ENCODE measurements at regions of chr16 and their contacts with region 1.

Region 1: GRCh38 chr16:72008424-72009216 is at the start of gene DHODH:
- DNase-seq: peak; percentile 98
- H3K4me3 ChIP-seq: peak within 1 kb of the TSS; percentile 91 to 95
- H3K4me3 Mint-ChIP-seq: peak within 1 kb of the TSS; percentile 94 to 100 (median 96)
- H3K27ac ChIP-seq: peak within 1 kb of the TSS; percentile 44
- H3K27ac Mint-ChIP-seq: peak within 1 kb of the TSS; percentile 51 to 96 (median 94)
- H3K4me1 ChIP-seq: no peaks in the 10 kb centered on the region
- H3K4me1 Mint-ChIP-seq: peaks cover 5 to 24% (median 10%) of the 10 kb centered on the region in 4 donors
- H3K27me3 ChIP-seq: no peaks in the 10 kb centered on the region
- H3K27me3 Mint-ChIP-seq: peaks cover 0 to under 1% of the 10 kb centered on the region in 2 donors
- total RNA-seq, gene DHODH: 9.6 to 9.7 TPM

Region 2: DNA sequence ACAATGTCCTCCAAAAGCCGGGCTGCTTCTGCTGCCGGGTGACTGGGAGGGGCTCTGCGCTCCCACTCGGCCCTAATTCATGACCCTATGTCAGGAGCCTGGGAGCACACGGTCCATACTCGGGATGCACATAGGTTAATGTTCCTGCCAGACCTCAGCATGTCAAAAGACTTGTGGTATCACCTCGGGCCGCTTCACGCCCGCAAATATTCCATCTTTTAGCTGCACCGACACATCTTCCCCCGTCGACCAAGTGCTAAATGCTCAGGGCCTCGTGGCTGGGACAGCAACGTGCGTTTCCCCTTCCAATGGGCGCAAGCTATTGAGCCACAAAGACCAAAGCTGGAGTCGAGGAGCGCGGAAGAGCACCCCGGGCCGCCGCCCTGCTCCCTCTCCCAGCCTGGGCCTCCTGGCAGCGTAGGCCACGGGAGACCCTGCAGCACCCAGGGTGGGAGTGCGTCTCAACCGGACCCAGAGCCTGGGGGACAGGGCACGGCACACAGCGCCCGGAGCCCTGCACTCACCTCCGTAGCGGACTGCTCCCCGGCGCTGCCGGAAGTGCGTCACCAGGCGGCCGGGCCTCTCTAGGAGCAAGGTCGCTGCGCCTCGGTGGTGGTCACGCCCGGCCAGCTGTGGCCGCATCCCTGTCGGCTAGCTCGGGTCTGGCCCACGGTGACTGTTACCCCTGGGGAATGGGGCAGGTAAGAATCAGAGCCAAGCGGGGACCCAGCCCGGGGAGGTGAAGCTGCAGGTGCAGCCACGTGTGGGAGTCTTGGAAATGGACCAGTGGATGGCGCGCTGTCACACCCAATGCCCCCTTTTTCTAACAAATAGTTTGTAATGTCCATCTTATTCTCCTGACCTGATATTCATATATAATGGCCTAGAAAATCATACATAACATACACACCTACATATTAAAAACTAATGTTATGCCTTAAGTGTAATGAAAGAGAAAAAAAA is 546.7 kb before region 1 on chr16 and contains the start of gene ZNF23:
- CTCF ChIA-PET with region 1: no interaction called
- POLR2A ChIA-PET with region 1: no interaction called
- intact Hi-C with region 1: loop called (anchors 10 kb)
- DNase-seq: peak; percentile 69 to 77 (median 71)
- H3K4me3 ChIP-seq: peak within 1 kb of the TSS; percentile 80 to 90
- H3K4me3 Mint-ChIP-seq: peak within 1 kb of the TSS; percentile 94 to 97 (median 96)
- H3K27ac ChIP-seq: peak within 1 kb of the TSS; percentile 76
- H3K27ac Mint-ChIP-seq: peak within 1 kb of the TSS; percentile 81 to 97 (median 95)
- H3K4me1 ChIP-seq: peaks cover 20% of the 10 kb centered on the region
- H3K4me1 Mint-ChIP-seq: peaks cover 10 to 31% (median 22%) of the 10 kb centered on the region in 4 donors
- H3K27me3 ChIP-seq: no peaks in the 10 kb centered on the region
- H3K27me3 Mint-ChIP-seq: no peaks in the 10 kb centered on the region
- total RNA-seq, gene ZNF23: 15.2 to 16.2 TPM

Region 3: GRCh38 chr16:71484006-71484893 is 524.4 kb before region 1 on chr16:
- CTCF ChIA-PET with region 1: no interaction called
- POLR2A ChIA-PET with region 1: no interaction called
- intact Hi-C with region 1: loop called (anchors 5 kb)
- DNase-seq: peak; percentile 84 to 92 (median 87)
- H3K4me3 ChIP-seq: peak overlapping the region; percentile 87 to 98
- H3K4me3 Mint-ChIP-seq: peak overlapping the region; percentile 82 to 92 (median 88)
- H3K27ac ChIP-seq: peak overlapping the region; percentile 87
- H3K27ac Mint-ChIP-seq: peak overlapping the region; percentile 81 to 98 (median 97)
- H3K4me1 ChIP-seq: peaks cover 10% of the 10 kb centered on the region
- H3K4me1 Mint-ChIP-seq: peaks cover 14 to 18% (median 17%) of the 10 kb centered on the region in 4 donors
- H3K27me3 ChIP-seq: no peaks in the 10 kb centered on the region
- H3K27me3 Mint-ChIP-seq: peaks cover 0 to 3% of the 10 kb centered on the region in 2 donors

Region 4: GRCh38 chr16:71723537-71724319 is 284.9 kb before region 1 on chr16:
- CTCF ChIA-PET with region 1: no interaction called
- POLR2A ChIA-PET with region 1: no interaction called
- intact Hi-C with region 1: loop called (anchors 1 kb)
- DNase-seq: peak; percentile 87 to 91 (median 88)
- H3K4me3 ChIP-seq: peak overlapping the region; percentile 45 to 54
- H3K4me3 Mint-ChIP-seq: peak overlapping the region; percentile 81 to 90 (median 88)
- H3K27ac ChIP-seq: peak overlapping the region; percentile 83
- H3K27ac Mint-ChIP-seq: peak overlapping the region; percentile 76 to 96 (median 89)
- H3K4me1 ChIP-seq: peaks cover 14% of the 10 kb centered on the region
- H3K4me1 Mint-ChIP-seq: peaks cover 7 to 20% (median 12%) of the 10 kb centered on the region in 4 donors
- H3K27me3 ChIP-seq: no peaks in the 10 kb centered on the region
- H3K27me3 Mint-ChIP-seq: peaks cover 0 to 1% of the 10 kb centered on the region in 2 donors

Region 5: GRCh38 chr16:71808593-71809459 is 199.8 kb before region 1 on chr16 and contains the start of gene AP1G1:
- CTCF ChIA-PET with region 1: no interaction called
- POLR2A ChIA-PET with region 1: no interaction called
- intact Hi-C with region 1: loop called (anchors 1 kb)
- DNase-seq: peak; percentile 94 to 98 (median 97)
- H3K4me3 ChIP-seq: peak within 1 kb of the TSS; percentile 98 to 99
- H3K4me3 Mint-ChIP-seq: peak within 1 kb of the TSS; percentile 92 to 99 (median 98)
- H3K27ac ChIP-seq: peak within 1 kb of the TSS; percentile 100
- H3K27ac Mint-ChIP-seq: peak within 1 kb of the TSS; percentile 96 to 100 (median 100)
- H3K4me1 ChIP-seq: peaks cover 39% of the 10 kb centered on the region
- H3K4me1 Mint-ChIP-seq: peaks cover 19 to 55% (median 37%) of the 10 kb centered on the region in 4 donors
- H3K27me3 ChIP-seq: no peaks in the 10 kb centered on the region
- H3K27me3 Mint-ChIP-seq: peaks cover 0 to 2% of the 10 kb centered on the region in 2 donors
- total RNA-seq, gene AP1G1: 101 to 103 TPM

Region 6: GRCh38 chr16:71894921-71895678 is 113.5 kb before region 1 on chr16 and contains the start of gene IST1:
- CTCF ChIA-PET with region 1: no interaction called
- POLR2A ChIA-PET with region 1: no interaction called
- intact Hi-C with region 1: loop called (anchors 1 kb)
- DNase-seq: peak; percentile 97 to 98 (median 97)
- H3K4me3 ChIP-seq: peak within 1 kb of the TSS; percentile 95 to 99
- H3K4me3 Mint-ChIP-seq: peak within 1 kb of the TSS; percentile 93 to 98 (median 96)
- H3K27ac ChIP-seq: peak within 1 kb of the TSS; percentile 90
- H3K27ac Mint-ChIP-seq: peak within 1 kb of the TSS; percentile 96 to 99 (median 98)
- H3K4me1 ChIP-seq: peaks cover 44% of the 10 kb centered on the region
- H3K4me1 Mint-ChIP-seq: peaks cover 10 to 51% (median 25%) of the 10 kb centered on the region in 4 donors
- H3K27me3 ChIP-seq: no peaks in the 10 kb centered on the region
- H3K27me3 Mint-ChIP-seq: no peaks in the 10 kb centered on the region
- total RNA-seq, gene IST1: 282 to 287 TPM

Region 7: DNA sequence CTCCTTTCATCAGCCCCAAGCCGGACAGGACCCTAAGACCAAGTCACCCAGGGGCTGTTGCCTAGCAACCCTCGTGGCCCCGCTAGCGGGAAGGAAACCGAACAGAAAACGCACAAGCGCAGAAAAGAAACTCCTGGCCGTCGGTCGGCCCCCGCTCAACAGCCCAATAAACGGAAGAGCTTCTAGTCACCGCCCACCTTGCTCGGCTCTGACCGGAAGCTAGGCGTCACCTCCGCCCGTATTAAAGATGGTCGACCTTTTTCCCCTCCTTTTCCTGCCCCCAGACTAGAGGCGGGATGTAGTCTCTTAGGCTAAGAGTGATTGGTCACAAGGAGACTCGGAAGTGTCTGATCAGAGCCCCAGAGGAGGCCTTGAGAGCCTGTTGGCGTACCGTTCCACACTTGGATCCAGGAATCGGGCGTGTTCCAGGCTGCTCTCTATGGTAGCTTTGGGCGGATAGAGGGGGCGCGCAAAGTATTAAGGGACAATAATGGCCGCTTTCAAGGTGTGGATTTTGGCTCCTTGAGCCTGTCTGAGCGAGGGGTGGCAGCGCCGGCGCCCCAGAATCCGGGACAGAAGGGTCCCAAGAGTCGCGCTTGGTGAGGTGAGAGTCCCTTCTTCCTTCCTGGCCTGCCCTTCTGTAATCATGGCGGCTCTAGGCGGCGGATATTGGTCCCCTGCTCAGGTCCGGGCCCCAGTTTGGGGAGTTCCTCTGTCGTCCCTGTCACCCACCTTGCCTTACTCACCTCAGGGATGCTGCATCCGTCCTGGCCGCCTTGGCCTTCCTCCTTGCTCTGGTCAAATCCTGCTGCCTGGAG is 85.0 kb after region 1 on chr16 and contains the starts of genes DHX38 and TXNL4B:
- CTCF ChIA-PET with region 1: no interaction called
- POLR2A ChIA-PET with region 1: no interaction called
- intact Hi-C with region 1: loop called (anchors 1 kb)
- DNase-seq: peak; percentile 92 to 97 (median 94)
- H3K4me3 ChIP-seq: peak within 1 kb of the TSS; percentile 82 to 88
- H3K4me3 Mint-ChIP-seq: peak within 1 kb of the TSS; percentile 97 to 100 (median 100)
- H3K27ac ChIP-seq: peak within 1 kb of the TSS; percentile 90
- H3K27ac Mint-ChIP-seq: peak within 1 kb of the TSS; percentile 90 to 100 (median 100)
- H3K4me1 ChIP-seq: peaks cover 43% of the 10 kb centered on the region
- H3K4me1 Mint-ChIP-seq: peaks cover 39 to 62% (median 47%) of the 10 kb centered on the region in 4 donors
- H3K27me3 ChIP-seq: no peaks in the 10 kb centered on the region
- H3K27me3 Mint-ChIP-seq: no peaks in the 10 kb centered on the region
- total RNA-seq, gene DHX38: 109 to 120 TPM
- total RNA-seq, gene TXNL4B: 23.7 to 26.1 TPM

Region 8: DNA sequence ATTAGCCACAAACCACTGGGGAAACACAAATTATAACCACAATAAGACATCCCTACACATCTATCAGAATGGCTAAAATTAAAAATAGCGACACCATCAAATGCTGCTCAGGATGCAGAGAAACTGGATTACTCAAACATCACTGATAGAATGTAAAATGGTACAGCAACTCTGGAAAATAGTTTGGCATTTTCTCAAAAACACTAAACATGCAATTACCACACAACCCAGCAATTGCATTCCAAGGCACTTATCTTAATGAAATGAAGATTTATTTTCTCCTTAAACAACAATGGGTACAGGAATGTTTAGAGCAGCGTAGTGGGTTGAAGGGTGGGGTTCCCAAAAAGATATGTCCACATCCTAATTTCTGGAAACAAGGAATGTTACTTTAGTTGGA is 472.3 kb after region 1 on chr16:
- CTCF ChIA-PET with region 1: no interaction called
- POLR2A ChIA-PET with region 1: no interaction called
- intact Hi-C with region 1: no loop called
- DNase-seq: no peak
- H3K4me3 ChIP-seq: no peak overlapping the region
- H3K4me3 Mint-ChIP-seq: peak overlapping the region in 4 of 8 donors; percentile 44 to 66 (median 64)
- H3K27ac ChIP-seq: no peak overlapping the region
- H3K27ac Mint-ChIP-seq: peak overlapping the region in 5 of 7 donors; percentile 38 to 84 (median 72)
- H3K4me1 ChIP-seq: peaks cover 34% of the 10 kb centered on the region
- H3K4me1 Mint-ChIP-seq: peaks cover 27 to 34% (median 32%) of the 10 kb centered on the region in 4 donors
- H3K27me3 ChIP-seq: no peaks in the 10 kb centered on the region
- H3K27me3 Mint-ChIP-seq: no peaks in the 10 kb centered on the region